ENCODE measurements at regions of chr6 and their contacts with region 1.

Region 1: DNA sequence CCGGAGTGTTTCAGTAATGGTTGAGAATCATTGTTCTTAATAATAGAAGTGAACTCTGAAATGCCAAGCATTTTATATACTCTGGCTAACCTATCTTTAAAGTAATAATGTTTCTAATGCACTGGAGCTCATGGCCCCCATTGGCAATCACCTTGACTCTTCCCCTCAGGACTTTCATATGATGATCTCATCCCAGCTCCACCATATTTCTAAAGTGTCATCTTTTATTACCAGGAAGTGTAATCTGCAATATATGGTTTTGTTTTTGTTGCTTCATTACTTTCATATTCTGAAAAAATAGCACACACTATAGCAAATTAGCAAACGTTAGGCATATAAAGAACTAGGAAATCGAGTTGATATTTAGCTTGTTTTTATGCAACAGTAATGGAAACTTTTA is 60.3 kb downstream of the TULP4 start:
- DNase-seq: no peak
- ATAC-seq: no peak
- H3K4me3 ChIP-seq: no peak overlapping the region
- H3K27ac ChIP-seq: no peak overlapping the region
- H3K4me1 ChIP-seq: peaks cover 5% of the 10 kb centered on the region; the same call in 1 of the 2 replicates
- H3K27me3 ChIP-seq: no peaks in the 10 kb centered on the region
- CTCF ChIP-seq: no peak
- POLR2A ChIP-seq: no peak
- RAD21 ChIP-seq: no peak

Region 2: GRCh38 chr6:158323561-158323958 is 49.0 kb before region 1 on chr6:
- CTCF ChIA-PET with region 1: no interaction called
- POLR2A ChIA-PET with region 1: interaction called, 13 read pairs
- dilution Hi-C with region 1: no loop called
- in situ Hi-C with region 1: no loop called
- intact Hi-C with region 1: no loop called
- DNase-seq: no peak
- ATAC-seq: no peak
- H3K4me3 ChIP-seq: no peak overlapping the region
- H3K27ac ChIP-seq: no peak overlapping the region
- H3K4me1 ChIP-seq: peaks cover 11% of the 10 kb centered on the region
- H3K27me3 ChIP-seq: no peaks in the 10 kb centered on the region
- CTCF ChIP-seq: no peak
- POLR2A ChIP-seq: no peak
- RAD21 ChIP-seq: no peak

Region 3: GRCh38 chr6:159968440-159969203 is 1596.0 kb after region 1 on chr6 and contains the start of gene IGF2R:
- CTCF ChIA-PET with region 1: no interaction called
- POLR2A ChIA-PET with region 1: no interaction called
- dilution Hi-C with region 1: no loop called
- in situ Hi-C with region 1: no loop called
- intact Hi-C with region 1: no loop called
- DNase-seq: peak; percentile 80
- ATAC-seq: peak; percentile 83
- H3K4me3 ChIP-seq: peak within 1 kb of the TSS; percentile 91
- H3K27ac ChIP-seq: peak within 1 kb of the TSS; percentile 93
- H3K4me1 ChIP-seq: peaks cover 5% of the 10 kb centered on the region
- H3K27me3 ChIP-seq: peaks cover 10% of the 10 kb centered on the region
- CTCF ChIP-seq: 0 out of 2 replicates have a peak, but pooled peaks have one; percentile 13
- POLR2A ChIP-seq: peak; percentile 75
- RAD21 ChIP-seq: no peak
- total RNA-seq, gene IGF2R: 33.2 and 38.6 TPM in 2 replicates

Measured in IMR-90 (cell line).